Right ventricle myocardium inferior (tissue), 1 donor: ENCODE measurements at regions of chr9 and their contacts with region 1.

Region 1: GRCh38 chr9:94135222-94135621 is 51.0 kb downstream of the PTPDC1 start:
- DNase-seq: no peak
- ATAC-seq: peak; percentile 74

Region 2: DNA sequence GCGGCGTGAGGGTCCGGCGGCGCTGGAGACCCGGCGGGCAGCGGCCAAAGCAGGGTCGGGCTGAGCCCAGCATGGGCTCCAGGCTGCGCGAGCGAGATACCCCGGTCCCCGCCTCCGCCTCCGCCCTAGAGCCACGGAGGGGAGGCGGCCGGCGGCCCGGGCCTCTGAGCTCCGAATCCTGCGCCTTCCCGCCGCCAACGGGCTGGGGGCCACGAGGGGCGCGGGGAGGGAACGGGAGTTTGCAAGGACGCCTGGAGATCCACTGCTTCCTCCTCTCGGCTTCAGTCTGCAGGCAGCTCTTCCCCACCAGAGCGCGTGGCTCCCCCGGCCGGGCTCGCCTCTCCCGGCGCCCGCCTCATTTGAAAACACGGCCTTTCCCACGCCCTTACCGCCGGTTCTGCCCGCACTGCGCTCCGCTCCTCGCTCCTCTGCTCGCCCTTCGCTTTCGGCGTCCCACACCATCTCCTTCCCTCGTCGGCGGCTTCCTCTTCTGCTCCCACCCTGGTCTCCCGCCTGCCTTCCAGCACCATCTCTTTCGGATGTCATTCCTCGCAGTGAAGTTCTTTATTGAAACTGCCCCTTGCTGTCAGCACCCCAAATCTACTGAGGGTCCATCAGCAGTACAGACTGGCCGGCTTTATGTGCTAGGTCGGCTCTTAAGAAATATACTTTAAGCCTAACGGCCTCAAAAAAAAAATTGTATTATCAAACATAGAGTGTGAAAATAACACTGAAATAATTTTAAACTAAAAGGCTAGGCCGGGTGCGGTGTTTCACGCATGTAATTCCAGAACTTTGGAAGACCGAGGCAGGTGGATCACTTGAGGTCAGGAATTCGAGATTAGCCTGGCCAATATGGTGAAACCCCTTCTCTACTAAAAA is 788.8 kb before region 1 on chr9:
- intact Hi-C with region 1: no loop called
- DNase-seq: no peak
- ATAC-seq: peak; percentile 72

Region 3: DNA sequence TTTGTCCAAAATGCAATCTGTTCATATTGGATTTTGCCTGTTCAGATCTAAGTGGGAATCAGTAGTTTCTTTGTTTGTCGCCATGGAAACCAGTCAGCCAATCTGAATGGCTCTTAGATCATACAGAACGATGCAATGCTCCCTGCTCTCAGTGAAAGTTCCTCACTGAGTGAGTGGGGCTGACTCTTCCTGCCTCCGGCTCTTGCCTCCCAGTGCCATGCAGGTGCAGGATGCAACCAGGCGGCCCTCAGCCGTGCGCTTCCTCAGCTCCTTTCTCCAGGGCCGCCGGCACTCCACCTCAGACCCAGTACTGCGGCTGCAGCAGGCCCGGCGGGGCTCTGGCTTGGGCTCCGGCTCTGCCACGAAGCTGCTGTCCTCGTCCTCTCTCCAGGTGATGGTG is 50.9 kb before region 1 on chr9 and contains the start of gene PTPDC1:
- intact Hi-C with region 1: loop called (anchors 2 kb)
- DNase-seq: peak; percentile 49
- ATAC-seq: no peak
- total RNA-seq, gene PTPDC1: 8.5 TPM

Region 4: GRCh38 chr9:94108584-94108983 is 26.6 kb before region 1 on chr9:
- intact Hi-C with region 1: loop called (anchors 1 kb)
- DNase-seq: no peak
- ATAC-seq: peak; percentile 94

Region 5: GRCh38 chr9:94166237-94166963 is 31.2 kb after region 1 on chr9:
- intact Hi-C with region 1: loop called (anchors 2 kb)
- DNase-seq: peak; percentile 98
- ATAC-seq: peak; percentile 83

Region 6: GRCh38 chr9:94259077-94259892 is 124.1 kb after region 1 on chr9 and contains the start of gene ZNF169:
- intact Hi-C with region 1: no loop called
- DNase-seq: peak; percentile 97
- ATAC-seq: peak; percentile 100
- total RNA-seq, gene ZNF169: 1.6 TPM